ENCODE measurements at regions of chr3 and their contacts with region 1.

Region 1: GRCh38 chr3:9731206-9732079 is at the start of gene BRPF1:
- DNase-seq: peak; percentile 98 to 100
- H3K4me3 ChIP-seq: peak within 1 kb of the TSS; percentile 99 to 100
- H3K27ac ChIP-seq: peak within 1 kb of the TSS; percentile 98
- H3K4me1 ChIP-seq: peaks cover 15 to 24% of the 10 kb centered on the region in 2 donors
- H3K27me3 ChIP-seq: no peaks in the 10 kb centered on the region
- CTCF ChIP-seq: peak in 1 of 3 experiments; percentile 7
- total RNA-seq, gene BRPF1: 18.6 TPM

Region 2: GRCh38 chr3:9749645-9750555 is 18.5 kb after region 1 on chr3 and contains the start of gene OGG1:
- intact Hi-C with region 1: loop called (anchors 1 kb)
- DNase-seq: peak; percentile 92 to 99
- H3K4me3 ChIP-seq: peak within 1 kb of the TSS; percentile 67 to 70
- H3K27ac ChIP-seq: peak within 1 kb of the TSS; percentile 76 to 84
- H3K4me1 ChIP-seq: peaks cover 4 to 14% of the 10 kb centered on the region in 2 donors
- H3K27me3 ChIP-seq: no peaks in the 10 kb centered on the region
- CTCF ChIP-seq: no peak
- total RNA-seq, gene OGG1: 36.0 TPM

Region 3: DNA sequence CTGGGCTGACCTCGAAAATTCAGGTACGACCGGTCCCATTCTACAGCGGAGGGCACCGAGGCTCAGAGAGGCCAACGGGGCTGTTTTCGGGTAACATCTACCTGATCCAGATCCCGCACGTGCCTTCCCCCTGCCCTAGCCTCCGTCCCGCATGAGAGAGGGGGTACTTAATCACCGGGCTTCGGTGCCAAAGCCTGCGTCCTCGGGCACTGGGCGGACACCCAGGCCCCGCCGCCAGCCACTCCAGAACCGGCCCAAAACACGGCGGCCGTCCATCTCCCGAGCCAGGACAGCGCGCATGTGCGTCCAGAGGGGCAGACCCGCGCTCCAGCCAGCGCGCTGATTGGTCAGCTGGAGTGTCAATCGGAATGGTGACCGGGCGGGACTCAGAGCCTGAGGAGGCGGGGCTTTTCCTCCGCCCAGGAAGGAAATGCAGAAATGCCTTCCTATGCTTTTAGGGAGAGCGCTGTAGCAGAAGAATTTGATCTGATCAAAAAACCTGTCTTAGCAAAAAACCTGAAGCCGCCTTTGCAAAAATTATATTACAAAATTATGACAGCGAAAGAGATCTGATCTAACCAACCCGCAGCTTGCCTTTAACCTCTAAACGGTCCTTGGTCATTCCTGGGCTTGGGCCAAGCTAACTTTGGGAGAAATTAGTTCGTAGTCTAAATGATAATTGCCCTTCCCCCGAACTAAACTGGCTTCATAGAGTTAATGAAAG is 112.4 kb after region 1 on chr3 and contains the start of gene RPUSD3:
- intact Hi-C with region 1: loop called (anchors 1 kb)
- DNase-seq: peak; percentile 89 to 99
- H3K4me3 ChIP-seq: peak within 1 kb of the TSS; percentile 76 to 77
- H3K27ac ChIP-seq: peak within 1 kb of the TSS; percentile 80 to 84
- H3K4me1 ChIP-seq: peaks cover 4 to 9% of the 10 kb centered on the region in 2 donors
- H3K27me3 ChIP-seq: no peaks in the 10 kb centered on the region
- CTCF ChIP-seq: no peak
- total RNA-seq, gene RPUSD3: 30.7 TPM

Region 4: GRCh38 chr3:9932843-9933560 is 201.6 kb after region 1 on chr3:
- intact Hi-C with region 1: loop called (anchors 2 kb)
- DNase-seq: peak; percentile 53 to 96
- H3K4me3 ChIP-seq: peak overlapping the region; percentile 82 to 96
- H3K27ac ChIP-seq: peak overlapping the region; percentile 97 to 99
- H3K4me1 ChIP-seq: peaks cover 11 to 21% of the 10 kb centered on the region in 2 donors
- H3K27me3 ChIP-seq: no peaks in the 10 kb centered on the region
- CTCF ChIP-seq: peak; percentile 84 to 93 (median 89)

Region 5: GRCh38 chr3:10142707-10143566 is 411.5 kb after region 1 on chr3:
- intact Hi-C with region 1: loop called (anchors 10 kb)
- DNase-seq: no peak
- H3K4me3 ChIP-seq: peak overlapping the region; percentile 65 to 91
- H3K27ac ChIP-seq: peak overlapping the region; percentile 90 to 96
- H3K4me1 ChIP-seq: peaks cover 7 to 22% of the 10 kb centered on the region in 2 donors
- H3K27me3 ChIP-seq: no peaks in the 10 kb centered on the region
- CTCF ChIP-seq: no peak

Measured in ascending aorta (tissue), 2 donors.